ENCODE measurements at regions of chr17 and their contacts with region 1.

Region 1: GRCh38 chr17:43324205-43324893 is 74.4 kb upstream of the ARL4D start:
- DNase-seq: no peak
- H3K4me3 ChIP-seq: no peak overlapping the region
- H3K27ac ChIP-seq: no peak overlapping the region
- H3K4me1 ChIP-seq: no peaks in the 10 kb centered on the region
- H3K27me3 ChIP-seq: no peaks in the 10 kb centered on the region
- CTCF ChIP-seq: no peak

Region 2: GRCh38 chr17:43169561-43170139 is 154.7 kb before region 1 on chr17:
- intact Hi-C with region 1: loop called (anchors 10 kb)
- DNase-seq: peak; percentile 54
- H3K4me3 ChIP-seq: peak overlapping the region; percentile 70
- H3K27ac ChIP-seq: peak overlapping the region; percentile 97
- H3K4me1 ChIP-seq: peaks cover 4% of the 10 kb centered on the region
- H3K27me3 ChIP-seq: no peaks in the 10 kb centered on the region
- CTCF ChIP-seq: no peak

Region 3: GRCh38 chr17:43199633-43200032 is 124.7 kb before region 1 on chr17:
- intact Hi-C with region 1: loop called (anchors 10 kb)
- DNase-seq: no peak
- H3K4me3 ChIP-seq: no peak overlapping the region
- H3K27ac ChIP-seq: no peak overlapping the region
- H3K4me1 ChIP-seq: no peaks in the 10 kb centered on the region
- H3K27me3 ChIP-seq: no peaks in the 10 kb centered on the region
- CTCF ChIP-seq: no peak

Region 4: DNA sequence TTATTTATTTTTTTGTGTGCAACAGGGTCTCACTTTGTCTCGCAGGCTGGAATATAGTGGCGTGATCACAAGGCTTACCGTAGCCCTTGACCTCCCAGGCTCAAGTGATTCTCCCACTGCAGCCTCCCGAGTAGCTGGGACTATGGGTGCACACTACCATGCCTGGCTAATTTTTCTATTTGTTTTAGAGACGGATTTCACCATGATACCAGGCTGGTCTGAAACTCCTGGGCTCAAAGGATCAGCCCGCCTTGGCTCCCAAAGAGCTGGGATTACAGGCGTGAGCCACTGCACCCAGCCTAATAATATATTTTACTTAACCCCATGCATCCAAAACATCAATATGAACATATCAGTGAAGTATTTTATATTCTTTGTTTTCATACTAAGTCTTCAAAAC is 98.0 kb before region 1 on chr17:
- intact Hi-C with region 1: no loop called
- DNase-seq: peak; percentile 1
- H3K4me3 ChIP-seq: no peak overlapping the region
- H3K27ac ChIP-seq: no peak overlapping the region
- H3K4me1 ChIP-seq: no peaks in the 10 kb centered on the region
- H3K27me3 ChIP-seq: no peaks in the 10 kb centered on the region
- CTCF ChIP-seq: no peak